Heart left ventricle (tissue), 16 donors: ENCODE measurements at regions of chr1 and their contacts with region 1.

Region 1: GRCh38 chr1:222455188-222455879 is 92.6 kb downstream of the HHIPL2 start:
- DNase-seq: peak; percentile 81 to 86 (median 85)
- ATAC-seq: peak; percentile 90 to 98 (median 94)
- H3K4me3 ChIP-seq: peak overlapping the region in 6 of 12 donors; percentile 0 to 27 (median 14)
- H3K27ac ChIP-seq: peak overlapping the region in 2 of 12 donors; percentile 5 to 30
- H3K4me1 ChIP-seq: peaks cover 0 to 12% (median 5%) of the 10 kb centered on the region in 12 donors
- H3K27me3 ChIP-seq: peaks cover 0 to 2% (median 0%) of the 10 kb centered on the region in 9 donors
- CTCF ChIP-seq: peak; percentile 86 to 97 (median 92)
- POLR2A ChIP-seq: no peak

Region 2: DNA sequence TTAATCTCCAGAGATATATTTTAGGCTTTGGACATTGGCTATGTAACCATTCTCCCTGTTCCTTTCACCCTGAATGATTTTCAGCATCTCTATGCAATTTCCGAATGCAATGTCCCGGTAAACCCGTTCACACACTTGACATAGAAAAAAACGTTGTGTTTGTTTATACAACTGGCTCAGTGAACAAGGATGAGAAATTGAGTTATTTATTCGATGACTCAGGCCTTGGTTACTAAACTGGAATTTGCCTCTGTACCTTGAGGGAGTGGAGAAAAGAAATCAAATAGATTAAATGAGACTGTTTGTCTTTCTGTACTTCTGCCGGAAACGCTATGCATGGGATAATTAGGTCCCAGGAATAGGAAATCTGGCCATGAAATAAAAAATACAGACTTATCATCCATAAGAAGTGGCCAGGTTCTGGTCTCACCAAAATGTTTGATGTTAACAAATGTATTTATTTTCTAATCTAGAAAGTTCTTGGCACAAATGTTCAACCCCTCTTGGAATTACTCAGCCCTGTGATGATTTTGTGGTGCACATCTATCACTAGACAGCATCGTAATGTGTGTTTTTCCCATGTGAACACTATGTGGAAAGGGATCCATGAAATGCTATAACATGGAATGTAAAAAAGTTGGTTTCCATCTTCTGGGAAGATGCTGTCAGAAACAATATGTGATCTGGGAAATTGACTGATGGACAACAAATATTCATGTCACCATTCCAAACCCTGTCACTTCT is 967.4 kb before region 1 on chr1:
- intact Hi-C with region 1: loop called in 2 of 10 experiments (anchors 5 to 10 kb)
- DNase-seq: no peak
- ATAC-seq: no peak
- H3K4me3 ChIP-seq: no peak overlapping the region
- H3K27ac ChIP-seq: no peak overlapping the region
- H3K4me1 ChIP-seq: no peaks in the 10 kb centered on the region
- H3K27me3 ChIP-seq: no peaks in the 10 kb centered on the region
- CTCF ChIP-seq: no peak
- POLR2A ChIP-seq: no peak

Region 3: GRCh38 chr1:221549815-221550214 is 905.5 kb before region 1 on chr1:
- intact Hi-C with region 1: loop called in 4 of 10 experiments (anchors 5 to 10 kb)
- DNase-seq: no peak
- ATAC-seq: no peak
- H3K4me3 ChIP-seq: no peak overlapping the region
- H3K27ac ChIP-seq: no peak overlapping the region
- H3K4me1 ChIP-seq: no peaks in the 10 kb centered on the region
- H3K27me3 ChIP-seq: no peaks in the 10 kb centered on the region
- CTCF ChIP-seq: no peak
- POLR2A ChIP-seq: no peak

Region 4: DNA sequence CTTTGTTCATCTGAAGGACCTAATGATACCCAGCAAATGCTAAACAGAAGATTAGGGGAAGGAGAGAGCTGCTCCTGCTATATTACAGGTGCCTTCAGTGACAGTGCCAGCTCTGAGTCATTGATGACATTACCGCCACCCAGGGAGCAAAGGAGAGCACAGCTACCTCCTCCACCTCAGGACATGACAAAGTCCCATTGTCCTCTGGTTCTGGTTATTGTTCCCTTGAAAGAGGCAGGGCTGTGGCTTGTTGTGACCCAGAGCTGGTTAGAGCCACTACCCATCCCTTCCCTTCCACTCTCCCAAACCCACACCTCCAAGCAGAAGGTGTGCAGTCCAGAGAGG is 350.0 kb before region 1 on chr1:
- intact Hi-C with region 1: loop called in 1 of 10 experiments (anchors 10 kb)
- DNase-seq: no peak
- ATAC-seq: peak in 3 of 4 donors; percentile 50 to 74 (median 63)
- H3K4me3 ChIP-seq: no peak overlapping the region
- H3K27ac ChIP-seq: no peak overlapping the region
- H3K4me1 ChIP-seq: peaks cover 0 to 18% (median 0%) of the 10 kb centered on the region in 12 donors
- H3K27me3 ChIP-seq: peaks cover 0 to 7% (median 0%) of the 10 kb centered on the region in 9 donors
- CTCF ChIP-seq: no peak
- POLR2A ChIP-seq: no peak

Region 5: DNA sequence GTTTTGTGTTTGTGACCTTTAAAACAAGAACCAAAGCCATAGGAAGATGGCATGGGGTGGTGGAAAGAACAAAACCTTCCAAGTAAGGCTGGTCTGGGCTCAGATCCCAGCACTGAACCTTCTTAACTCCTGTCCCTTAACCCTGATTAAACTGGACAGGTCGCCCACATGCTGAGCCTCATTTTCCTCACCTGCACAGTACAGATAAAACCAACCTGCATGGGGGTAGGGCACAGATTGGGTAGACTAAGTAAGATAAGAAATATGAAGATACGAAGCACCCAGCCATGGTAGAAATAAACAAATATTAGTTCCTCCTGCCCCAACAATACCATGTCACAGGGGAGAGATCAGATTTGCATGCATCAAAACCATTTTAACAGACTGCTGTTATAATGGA is 16.7 kb before region 1 on chr1:
- intact Hi-C with region 1: no loop called
- DNase-seq: no peak
- ATAC-seq: no peak
- H3K4me3 ChIP-seq: no peak overlapping the region
- H3K27ac ChIP-seq: no peak overlapping the region
- H3K4me1 ChIP-seq: peaks cover 0 to 9% (median 0%) of the 10 kb centered on the region in 12 donors
- H3K27me3 ChIP-seq: no peaks in the 10 kb centered on the region
- CTCF ChIP-seq: no peak
- POLR2A ChIP-seq: no peak